T-cell (primary cell): ENCODE measurements at regions of chr3 and their contacts with region 1.

Region 1: DNA sequence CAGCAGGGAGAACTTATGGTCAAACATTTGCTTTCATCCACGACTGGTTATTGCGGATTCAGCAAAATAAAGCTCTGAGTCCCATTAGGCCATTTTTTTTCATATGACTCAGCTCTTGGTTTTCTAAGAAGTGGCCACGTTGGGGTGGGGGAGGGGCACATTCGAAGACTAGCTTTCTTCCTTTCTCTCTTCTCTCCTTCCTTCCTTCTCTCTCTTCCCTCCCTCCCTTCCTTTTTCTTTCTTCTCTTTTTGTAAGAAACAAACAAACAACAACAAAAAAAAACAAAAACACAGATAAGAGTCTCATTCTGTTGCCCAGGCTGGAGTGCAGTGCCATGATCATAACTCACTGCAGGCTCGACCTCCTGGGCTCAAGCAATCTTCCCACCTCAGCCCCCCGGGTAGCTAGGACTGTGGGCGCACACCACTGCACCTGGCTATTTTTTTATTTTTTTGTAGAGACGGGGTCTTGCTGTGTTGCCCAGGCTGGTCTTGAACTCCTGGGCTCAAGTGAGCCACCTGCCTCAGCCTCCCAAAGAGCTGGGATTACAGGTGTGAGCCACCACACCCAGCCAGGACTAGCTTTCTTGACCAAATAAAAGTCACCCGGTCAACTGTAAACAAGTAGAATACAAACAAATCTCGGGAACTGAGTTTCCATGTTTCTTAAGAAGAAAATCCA is 41.6 kb downstream of the ABCC5 start:
- DNase-seq: no peak
- ATAC-seq: no peak
- H3K4me3 ChIP-seq: no peak overlapping the region
- H3K4me3 Mint-ChIP-seq: no peak overlapping the region
- H3K27ac ChIP-seq: no peak overlapping the region
- H3K27ac Mint-ChIP-seq: no peak overlapping the region
- H3K4me1 ChIP-seq: no peaks in the 10 kb centered on the region
- H3K4me1 Mint-ChIP-seq: no peaks in the 10 kb centered on the region
- H3K27me3 ChIP-seq: no peaks in the 10 kb centered on the region
- H3K27me3 Mint-ChIP-seq: no peaks in the 10 kb centered on the region

Region 2: GRCh38 chr3:183734750-183735494 is 241.2 kb before region 1 on chr3:
- CTCF ChIA-PET with region 1: interaction called in 1 of 2 experiments, 10 read pairs
- POLR2A ChIA-PET with region 1: no interaction called
- DNase-seq: no peak
- ATAC-seq: no peak
- H3K4me3 ChIP-seq: no peak overlapping the region
- H3K4me3 Mint-ChIP-seq: no peak overlapping the region
- H3K27ac ChIP-seq: no peak overlapping the region
- H3K27ac Mint-ChIP-seq: no peak overlapping the region
- H3K4me1 ChIP-seq: no peaks in the 10 kb centered on the region
- H3K4me1 Mint-ChIP-seq: peaks cover 0 to 5% (median 0%) of the 10 kb centered on the region in 3 donors
- H3K27me3 ChIP-seq: no peaks in the 10 kb centered on the region
- H3K27me3 Mint-ChIP-seq: no peaks in the 10 kb centered on the region